ENCODE measurements at regions of chr2 and their contacts with region 1.

Region 1: GRCh38 chr2:121561617-121562268 is 31.1 kb downstream of the RNU4ATAC start:
- DNase-seq: no peak
- ATAC-seq: peak; percentile 15; the same call in 2 of the 3 replicates
- H3K4me3 ChIP-seq: no peak overlapping the region
- H3K27ac ChIP-seq: peak overlapping the region; percentile 45
- H3K4me1 ChIP-seq: peaks cover 17% of the 10 kb centered on the region
- H3K27me3 ChIP-seq: no peaks in the 10 kb centered on the region
- CTCF ChIP-seq: no peak
- EP300 ChIP-seq: no peak
- POLR2A ChIP-seq: no peak
- RAD21 ChIP-seq: no peak

Region 2: GRCh38 chr2:121099329-121100290 is 462.1 kb before region 1 on chr2:
- CTCF ChIA-PET with region 1: no interaction called
- POLR2A ChIA-PET with region 1: no interaction called
- RAD21 ChIA-PET with region 1: no interaction called
- SMC1A ChIA-PET with region 1: no interaction called
- in situ Hi-C with region 1: no loop called
- intact Hi-C with region 1: no loop called
- DNase-seq: no peak
- ATAC-seq: peak; percentile 51; the same call in 2 of the 3 replicates
- H3K4me3 ChIP-seq: no peak overlapping the region
- H3K27ac ChIP-seq: no peak overlapping the region
- H3K4me1 ChIP-seq: no peaks in the 10 kb centered on the region
- H3K27me3 ChIP-seq: peaks cover 2 to 5% of the 10 kb centered on the region in 2 experiments; a peak in 3 of 4 replicates
- CTCF ChIP-seq: peak; percentile 29 to 41 (median 31); a peak in 4 of 6 replicates
- EP300 ChIP-seq: no peak
- POLR2A ChIP-seq: no peak
- RAD21 ChIP-seq: 0 out of 2 replicates have a peak, but pooled peaks have one; percentile 10

Region 3: DNA sequence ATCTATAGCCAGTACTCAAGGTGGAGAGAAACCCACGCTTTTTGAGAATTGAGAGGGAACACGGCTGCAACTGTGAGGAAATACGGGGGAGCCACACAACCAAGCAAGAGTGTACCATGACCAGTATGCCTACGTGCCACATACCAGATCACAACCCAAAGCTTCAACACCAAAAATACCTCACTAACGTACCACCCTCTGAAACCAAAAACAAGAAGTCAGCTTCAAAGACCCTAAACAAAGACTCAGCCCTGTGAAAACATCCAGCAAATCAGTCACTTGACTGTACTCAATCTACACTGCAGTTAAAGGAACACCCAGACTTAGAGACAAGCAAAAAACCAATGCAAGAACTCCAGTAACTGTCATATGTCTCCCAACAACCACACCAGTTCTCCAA is 14.1 kb before region 1 on chr2:
- CTCF ChIA-PET with region 1: interaction called, 3 read pairs
- POLR2A ChIA-PET with region 1: interaction called, 4 read pairs
- RAD21 ChIA-PET with region 1: interaction called, 7 read pairs
- SMC1A ChIA-PET with region 1: interaction called, 15 read pairs
- in situ Hi-C with region 1: no loop called
- intact Hi-C with region 1: no loop called
- DNase-seq: peak; percentile 68
- ATAC-seq: peak; percentile 52
- H3K4me3 ChIP-seq: no peak overlapping the region
- H3K27ac ChIP-seq: peak overlapping the region; percentile 58
- H3K4me1 ChIP-seq: peaks cover 21% of the 10 kb centered on the region
- H3K27me3 ChIP-seq: no peaks in the 10 kb centered on the region
- CTCF ChIP-seq: no peak
- EP300 ChIP-seq: no peak
- POLR2A ChIP-seq: no peak
- RAD21 ChIP-seq: no peak

Region 4: DNA sequence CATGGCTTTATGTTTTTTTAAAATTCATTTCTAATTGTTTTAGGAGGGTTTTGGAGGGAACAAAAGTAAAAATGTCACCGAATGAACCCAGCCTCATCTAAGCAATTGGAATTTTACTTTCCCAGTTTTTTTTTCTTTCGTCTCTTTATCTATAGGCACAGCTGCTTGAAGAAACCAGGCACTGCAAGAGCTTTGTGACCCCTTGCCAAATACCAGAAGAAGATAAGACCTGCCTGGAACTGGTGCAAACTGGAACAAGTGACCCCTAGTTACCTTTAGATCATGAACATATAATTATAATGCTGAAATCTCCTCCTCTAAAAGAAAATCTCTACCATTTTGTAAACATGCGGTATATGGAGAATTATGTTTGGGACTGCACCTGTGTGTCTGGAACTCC is 294.6 kb after region 1 on chr2:
- CTCF ChIA-PET with region 1: no interaction called
- POLR2A ChIA-PET with region 1: no interaction called
- RAD21 ChIA-PET with region 1: no interaction called
- SMC1A ChIA-PET with region 1: no interaction called
- in situ Hi-C with region 1: no loop called
- intact Hi-C with region 1: no loop called
- DNase-seq: no peak
- ATAC-seq: no peak
- H3K4me3 ChIP-seq: no peak overlapping the region
- H3K27ac ChIP-seq: no peak overlapping the region
- H3K4me1 ChIP-seq: no peaks in the 10 kb centered on the region
- H3K27me3 ChIP-seq: no peaks in the 10 kb centered on the region
- CTCF ChIP-seq: no peak
- EP300 ChIP-seq: no peak
- POLR2A ChIP-seq: no peak
- RAD21 ChIP-seq: no peak

Measured in GM12878 (cell line).